ENCODE measurements at regions of chr2 and their contacts with region 1.

Region 1: DNA sequence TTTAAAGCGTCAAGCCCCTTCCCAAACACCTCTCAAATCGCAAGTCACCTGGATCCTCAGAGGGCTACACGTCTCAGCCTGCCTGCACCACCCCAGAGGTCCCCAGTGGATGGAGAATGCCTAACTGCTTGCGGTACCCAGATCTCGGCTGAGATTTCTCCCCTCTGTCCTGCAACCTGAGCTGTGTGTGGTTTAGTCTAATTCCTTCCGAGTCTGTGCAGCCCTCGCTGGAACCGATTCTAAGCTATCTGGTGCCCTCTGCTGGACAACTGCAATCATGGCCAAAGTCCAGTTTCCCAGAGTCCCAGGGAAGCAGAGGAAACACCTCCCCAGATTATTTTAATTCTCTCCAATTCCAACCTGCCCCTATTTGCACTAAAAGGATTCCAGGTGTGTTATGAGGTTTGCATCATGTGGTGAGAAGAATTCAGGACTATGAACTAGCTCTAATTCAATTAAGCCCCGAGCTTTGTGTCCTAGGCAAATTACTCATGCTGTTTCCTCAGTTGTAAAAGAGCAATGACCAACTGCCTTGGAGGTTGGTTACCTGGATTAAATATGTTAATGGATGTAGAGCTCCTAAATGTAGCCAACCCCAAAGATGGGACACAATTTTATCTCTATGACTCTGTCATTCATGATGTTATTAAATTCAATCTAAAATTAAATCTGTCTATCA is 276.1 kb upstream of the NCKAP5 start:
- DNase-seq: peak; percentile 77
- H3K4me3 Mint-ChIP-seq: no peak overlapping the region
- H3K27ac Mint-ChIP-seq: no peak overlapping the region
- H3K4me1 Mint-ChIP-seq: peaks cover 29% of the 10 kb centered on the region
- H3K27me3 Mint-ChIP-seq: no peaks in the 10 kb centered on the region
- CTCF ChIP-seq: peak; percentile 82

Region 2: GRCh38 chr2:133266041-133266925 is 578.1 kb before region 1 on chr2:
- CTCF ChIA-PET with region 1: interaction called, 7 read pairs
- intact Hi-C with region 1: loop called (anchors 1 kb)
- DNase-seq: peak; percentile 15
- H3K4me3 Mint-ChIP-seq: peak overlapping the region; percentile 83
- H3K27ac Mint-ChIP-seq: peak overlapping the region; percentile 60
- H3K4me1 Mint-ChIP-seq: peaks cover 24% of the 10 kb centered on the region
- H3K27me3 Mint-ChIP-seq: peaks cover 22% of the 10 kb centered on the region
- CTCF ChIP-seq: no peak

Region 3: GRCh38 chr2:133517876-133518275 is 326.5 kb before region 1 on chr2:
- CTCF ChIA-PET with region 1: interaction called, 30 read pairs
- intact Hi-C with region 1: loop called (anchors 1 kb)
- DNase-seq: no peak
- H3K4me3 Mint-ChIP-seq: no peak overlapping the region
- H3K27ac Mint-ChIP-seq: no peak overlapping the region
- H3K4me1 Mint-ChIP-seq: no peaks in the 10 kb centered on the region
- H3K27me3 Mint-ChIP-seq: peaks cover 7% of the 10 kb centered on the region
- CTCF ChIP-seq: no peak

Region 4: GRCh38 chr2:133568172-133568571 is 276.2 kb before region 1 on chr2 and contains the start of gene NCKAP5:
- CTCF ChIA-PET with region 1: interaction called, 6 read pairs
- intact Hi-C with region 1: loop called (anchors 2 kb)
- DNase-seq: no peak
- H3K4me3 Mint-ChIP-seq: peak within 1 kb of the TSS; percentile 54
- H3K27ac Mint-ChIP-seq: peak within 1 kb of the TSS; percentile 10
- H3K4me1 Mint-ChIP-seq: peaks cover 46% of the 10 kb centered on the region
- H3K27me3 Mint-ChIP-seq: no peaks in the 10 kb centered on the region
- CTCF ChIP-seq: no peak
- total RNA-seq, gene NCKAP5: 1.2 and 2.2 TPM in 2 replicates